Dendritic cell treated with granulocyte-macrophage colony-stimulating factor and Interleukin-4, amounts not matched to agents 40 ng/mL and 50 ng/mL, for 4 days (primary cell): ENCODE measurements at regions of chr15 and their contacts with region 1.

Region 1: DNA sequence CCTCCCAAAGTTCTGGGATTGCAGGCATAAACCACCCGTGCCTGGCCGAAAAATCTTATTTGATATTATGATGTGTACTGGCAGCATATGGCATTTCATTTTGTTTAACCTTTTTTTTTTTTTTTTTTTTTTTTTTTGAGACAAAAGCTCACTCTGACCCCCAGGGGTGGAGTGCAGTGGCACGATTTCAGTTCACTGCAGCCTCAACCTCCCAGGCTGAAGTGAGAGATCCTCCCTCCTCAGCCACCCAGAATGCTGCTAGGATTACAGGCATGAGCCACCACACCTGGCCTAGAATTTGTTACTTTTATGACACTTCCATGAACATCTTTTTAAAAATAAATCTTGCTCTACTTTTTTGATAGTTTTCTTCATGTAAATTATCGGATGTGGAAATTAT is 12.0 kb downstream of the TERB2 start:
- H3K4me3 Mint-ChIP-seq: no peak overlapping the region
- H3K27ac Mint-ChIP-seq: no peak overlapping the region
- H3K4me1 Mint-ChIP-seq: no peaks in the 10 kb centered on the region
- H3K27me3 Mint-ChIP-seq: no peaks in the 10 kb centered on the region

Region 2: GRCh38 chr15:45030743-45031142 is 62.3 kb after region 1 on chr15:
- intact Hi-C with region 1: loop called (anchors 10 kb)
- H3K4me3 Mint-ChIP-seq: no peak overlapping the region
- H3K27ac Mint-ChIP-seq: no peak overlapping the region
- H3K4me1 Mint-ChIP-seq: peaks cover 26% of the 10 kb centered on the region
- H3K27me3 Mint-ChIP-seq: peaks cover 3% of the 10 kb centered on the region